Activated CD8-positive, alpha-beta T cell treated with anti-CD3 and anti-CD28 coated beads for 36 hours (primary cell): ENCODE measurements at regions of chr1 and their contacts with region 1.

Region 1: GRCh38 chr1:2586154-2587070 is at the start of gene PRXL2B:
- DNase-seq: peak; percentile 99
- ATAC-seq: peak; percentile 74
- H3K4me3 Mint-ChIP-seq: peak within 1 kb of the TSS; percentile 83
- H3K27ac Mint-ChIP-seq: peak within 1 kb of the TSS; percentile 92
- H3K4me1 Mint-ChIP-seq: peaks cover 37% of the 10 kb centered on the region
- H3K27me3 Mint-ChIP-seq: no peaks in the 10 kb centered on the region
- CTCF ChIP-seq: no peak
- total RNA-seq, gene PRXL2B: 39.1 to 43.6 TPM

Region 2: DNA sequence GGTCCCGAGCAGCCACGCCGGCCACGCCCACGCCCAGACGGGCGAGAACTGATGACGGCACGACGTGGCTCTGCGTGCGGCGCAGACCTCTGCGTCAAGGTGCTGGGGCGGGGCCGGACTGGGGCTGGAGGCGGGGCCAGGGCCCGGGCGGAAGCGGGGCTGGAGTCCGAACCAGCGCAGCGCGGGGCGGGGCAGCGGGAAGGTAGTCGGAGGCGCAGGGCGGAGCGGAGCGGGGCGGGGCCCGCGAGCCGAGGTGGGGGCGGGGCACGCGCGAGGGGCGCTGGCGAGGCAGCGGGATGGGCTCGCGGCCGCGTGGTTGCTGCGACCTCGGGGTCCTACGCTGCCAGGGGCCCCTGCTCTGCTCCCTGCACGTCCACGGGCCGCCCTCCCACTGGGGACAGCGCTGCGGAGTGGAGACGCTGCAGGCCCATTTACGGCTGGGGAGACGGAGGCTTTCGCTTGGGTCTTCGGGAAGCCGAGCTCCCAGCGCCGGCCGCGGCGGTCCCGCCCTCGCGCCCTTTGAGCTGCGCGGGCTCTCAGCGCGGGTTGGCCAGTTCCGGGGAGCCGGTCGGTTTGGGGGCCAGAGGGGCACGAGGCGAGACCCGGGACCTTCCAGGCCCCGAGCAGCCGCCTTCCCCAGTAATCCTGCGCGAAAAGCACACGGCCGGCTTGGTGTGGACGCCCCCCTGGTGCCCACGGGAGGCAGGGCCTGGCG is 173.7 kb before region 1 on chr1 and contains the start of gene PEX10:
- CTCF ChIA-PET with region 1: interaction called, 10 read pairs
- POLR2A ChIA-PET with region 1: interaction called, 6 read pairs
- intact Hi-C with region 1: no loop called
- DNase-seq: peak; percentile 99
- ATAC-seq: peak; percentile 92
- H3K4me3 Mint-ChIP-seq: peak within 1 kb of the TSS; percentile 90
- H3K27ac Mint-ChIP-seq: peak within 1 kb of the TSS; percentile 87
- H3K4me1 Mint-ChIP-seq: peaks cover 36% of the 10 kb centered on the region
- H3K27me3 Mint-ChIP-seq: no peaks in the 10 kb centered on the region
- CTCF ChIP-seq: no peak
- total RNA-seq, gene PEX10: 17.1 to 19.0 TPM

Region 3: DNA sequence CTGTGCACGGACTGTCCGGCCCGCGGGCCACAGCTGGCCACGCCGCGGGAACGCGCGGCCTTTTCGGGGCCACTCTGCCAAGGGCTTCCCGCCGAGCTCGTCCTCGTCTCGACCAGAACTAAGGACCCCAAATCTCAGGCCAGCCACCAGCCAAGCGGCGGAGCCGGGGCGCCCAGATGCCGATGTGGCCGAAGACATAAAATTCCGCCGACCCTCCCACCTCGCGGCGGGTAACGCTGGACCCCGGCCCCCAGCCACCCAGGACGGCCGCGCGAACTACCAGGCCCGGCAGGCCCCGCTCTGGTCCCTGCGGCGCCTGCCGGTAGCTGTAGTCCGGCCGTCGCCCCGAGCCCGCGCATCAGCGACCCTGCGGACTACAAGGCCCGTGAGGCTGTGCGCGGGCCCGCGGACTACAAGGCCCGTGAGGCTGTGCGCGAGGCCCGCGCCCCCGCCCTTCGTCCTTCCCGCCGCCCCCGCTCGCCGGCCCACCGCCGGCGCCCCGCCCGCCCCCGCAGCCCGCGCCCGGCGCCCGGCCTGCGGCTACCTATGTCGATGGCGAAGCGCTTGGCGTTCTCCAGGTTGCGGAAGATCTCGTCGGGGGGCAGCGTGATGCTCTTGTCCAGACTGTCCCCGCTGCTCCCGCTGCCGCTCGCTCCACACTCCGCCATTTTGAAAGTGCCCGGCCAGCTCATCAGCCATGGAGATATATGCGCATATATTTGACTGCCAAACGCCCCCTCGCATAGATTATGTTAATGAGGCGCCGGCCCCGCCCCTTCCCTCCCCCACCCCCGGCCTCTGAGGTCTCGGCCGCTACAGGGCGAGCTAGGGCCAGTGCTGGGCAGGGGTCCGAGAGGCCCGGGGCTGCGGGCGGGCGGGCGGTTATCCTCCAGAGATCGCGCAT is 60.2 kb before region 1 on chr1 and contains the start of gene PANK4:
- CTCF ChIA-PET with region 1: no interaction called
- POLR2A ChIA-PET with region 1: interaction called, 11 read pairs
- intact Hi-C with region 1: no loop called
- DNase-seq: peak; percentile 94
- ATAC-seq: peak; percentile 83
- H3K4me3 Mint-ChIP-seq: peak within 1 kb of the TSS; percentile 81
- H3K27ac Mint-ChIP-seq: peak within 1 kb of the TSS; percentile 98
- H3K4me1 Mint-ChIP-seq: peaks cover 47% of the 10 kb centered on the region
- H3K27me3 Mint-ChIP-seq: peaks cover 7% of the 10 kb centered on the region
- CTCF ChIP-seq: no peak
- total RNA-seq, gene PANK4: 39.0 to 40.6 TPM

Region 4: GRCh38 chr1:2545759-2546514 is 40.5 kb before region 1 on chr1:
- CTCF ChIA-PET with region 1: interaction called, 11 read pairs
- POLR2A ChIA-PET with region 1: interaction called, 39 read pairs
- intact Hi-C with region 1: loop called (anchors 5 kb)
- DNase-seq: peak; percentile 94
- ATAC-seq: peak; percentile 47
- H3K4me3 Mint-ChIP-seq: peak overlapping the region; percentile 83
- H3K27ac Mint-ChIP-seq: peak overlapping the region; percentile 98
- H3K4me1 Mint-ChIP-seq: peaks cover 24% of the 10 kb centered on the region
- H3K27me3 Mint-ChIP-seq: no peaks in the 10 kb centered on the region
- CTCF ChIP-seq: no peak

Region 5: DNA sequence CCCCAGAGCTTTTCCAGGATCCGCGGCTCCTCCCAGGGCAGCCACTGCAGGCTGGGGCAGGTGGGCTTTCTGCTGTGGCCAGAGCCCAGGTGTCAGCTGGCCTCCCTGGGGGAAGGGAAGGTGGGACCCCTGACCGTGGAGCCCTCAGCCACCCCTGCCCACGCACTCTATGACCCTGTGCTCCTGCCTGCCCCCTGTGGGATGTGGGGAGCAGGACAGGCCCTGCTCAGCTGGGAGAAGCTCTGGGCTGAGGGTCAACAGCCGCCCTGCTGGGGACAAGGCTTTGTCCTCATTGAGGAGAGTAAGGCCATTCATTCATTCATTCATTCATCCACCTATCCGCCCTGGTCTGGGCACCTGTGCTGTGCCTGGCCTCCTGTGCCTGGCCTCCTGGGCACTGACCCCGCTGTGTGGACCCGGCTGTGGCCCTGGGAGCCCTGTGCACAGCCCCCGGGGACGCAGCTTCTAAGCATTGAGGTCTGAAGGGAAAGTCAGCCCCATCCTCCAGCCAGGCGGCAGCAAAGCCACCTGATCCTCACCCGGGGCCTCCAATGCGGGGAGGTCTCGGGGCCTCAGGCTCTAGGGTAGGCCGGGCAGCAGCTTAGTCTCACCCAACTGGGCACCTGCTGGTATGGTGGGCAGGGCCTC is 24.4 kb before region 1 on chr1:
- CTCF ChIA-PET with region 1: interaction called, 11 read pairs
- POLR2A ChIA-PET with region 1: interaction called, 100 read pairs
- intact Hi-C with region 1: no loop called
- DNase-seq: peak; percentile 49
- ATAC-seq: peak; percentile 65
- H3K4me3 Mint-ChIP-seq: no peak overlapping the region
- H3K27ac Mint-ChIP-seq: no peak overlapping the region
- H3K4me1 Mint-ChIP-seq: peaks cover 19% of the 10 kb centered on the region
- H3K27me3 Mint-ChIP-seq: no peaks in the 10 kb centered on the region
- CTCF ChIP-seq: peak; percentile 75

Region 6: GRCh38 chr1:2642560-2643413 is 56.4 kb after region 1 on chr1:
- CTCF ChIA-PET with region 1: no interaction called
- POLR2A ChIA-PET with region 1: interaction called, 15 read pairs
- intact Hi-C with region 1: loop called (anchors 10 kb)
- DNase-seq: peak; percentile 96
- ATAC-seq: peak; percentile 83
- H3K4me3 Mint-ChIP-seq: peak overlapping the region; percentile 88
- H3K27ac Mint-ChIP-seq: peak overlapping the region; percentile 91
- H3K4me1 Mint-ChIP-seq: peaks cover 7% of the 10 kb centered on the region
- H3K27me3 Mint-ChIP-seq: no peaks in the 10 kb centered on the region
- CTCF ChIP-seq: no peak